Breast epithelium (tissue), 4 donors: ENCODE measurements at regions of chr7 and their contacts with region 1.

Region 1: GRCh38 chr7:151379534-151380198 is 30.2 kb downstream of the WDR86 start:
- DNase-seq: no peak
- H3K4me3 ChIP-seq: no peak overlapping the region
- H3K27ac ChIP-seq: no peak overlapping the region
- H3K4me1 ChIP-seq: no peaks in the 10 kb centered on the region
- H3K27me3 ChIP-seq: no peaks in the 10 kb centered on the region
- CTCF ChIP-seq: no peak
- POLR2A ChIP-seq: no peak

Region 2: DNA sequence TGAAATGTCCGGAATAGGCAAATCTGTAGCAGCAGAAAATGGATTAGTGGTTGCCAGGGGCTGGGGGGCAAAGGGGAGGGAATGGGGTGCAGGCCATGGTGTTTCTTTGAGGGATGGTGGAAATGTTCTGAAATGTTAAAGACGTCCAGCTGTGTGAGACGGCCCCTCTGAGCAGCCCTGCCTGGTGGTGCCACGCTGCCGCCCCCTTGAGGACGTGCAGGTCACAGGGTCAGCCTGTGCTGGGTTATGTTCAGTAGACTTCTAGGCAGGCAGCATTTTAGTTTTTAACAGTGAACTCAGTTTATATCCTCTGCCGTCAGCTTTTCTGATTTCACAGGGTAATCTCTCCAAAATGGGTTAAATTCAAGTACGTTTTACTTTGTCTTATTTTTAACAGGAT is 28.6 kb before region 1 on chr7:
- intact Hi-C with region 1: loop called (anchors 1 kb)
- DNase-seq: no peak
- H3K4me3 ChIP-seq: no peak overlapping the region
- H3K27ac ChIP-seq: no peak overlapping the region
- H3K4me1 ChIP-seq: no peaks in the 10 kb centered on the region
- H3K27me3 ChIP-seq: no peaks in the 10 kb centered on the region
- CTCF ChIP-seq: no peak
- POLR2A ChIP-seq: no peak